CD14-positive monocyte (primary cell): ENCODE measurements at regions of chr2 and their contacts with region 1.

Region 1: GRCh38 chr2:197168705-197169104 is 141.9 kb downstream of the ANKRD44 start:
- DNase-seq: peak; percentile 56 to 72 (median 71)
- H3K4me3 ChIP-seq: no peak overlapping the region
- H3K4me3 Mint-ChIP-seq: peak overlapping the region; percentile 54 to 57
- H3K27ac ChIP-seq: peak overlapping the region in 1 of 2 donors; percentile 68
- H3K27ac Mint-ChIP-seq: peak overlapping the region; percentile 41 to 83 (median 70)
- H3K4me1 ChIP-seq: peaks cover 10 to 13% of the 10 kb centered on the region in 2 donors
- H3K4me1 Mint-ChIP-seq: peaks cover 21% of the 10 kb centered on the region
- H3K27me3 ChIP-seq: no peaks in the 10 kb centered on the region
- H3K27me3 Mint-ChIP-seq: peaks cover 0 to 1% (median 0%) of the 10 kb centered on the region in 3 donors
- CTCF ChIP-seq: peak; percentile 83

Region 2: GRCh38 chr2:197113275-197113711 is 55.4 kb before region 1 on chr2:
- intact Hi-C with region 1: loop called (anchors 5 to 10 kb)
- DNase-seq: peak in 2 of 3 donors; percentile 25 to 53
- H3K4me3 ChIP-seq: no peak overlapping the region
- H3K4me3 Mint-ChIP-seq: no peak overlapping the region
- H3K27ac ChIP-seq: peak overlapping the region in 1 of 2 donors; percentile 29
- H3K27ac Mint-ChIP-seq: peak overlapping the region in 2 of 7 donors; percentile 55 to 62
- H3K4me1 ChIP-seq: no peaks in the 10 kb centered on the region
- H3K4me1 Mint-ChIP-seq: no peaks in the 10 kb centered on the region
- H3K27me3 ChIP-seq: no peaks in the 10 kb centered on the region
- H3K27me3 Mint-ChIP-seq: no peaks in the 10 kb centered on the region
- CTCF ChIP-seq: peak; percentile 83